Activated CD8-positive, alpha-beta T cell treated with anti-CD3 and anti-CD28 coated beads, Interleukin-2, amount 10 ng/mL, durations not matched to agents 7 days and 5 days (primary cell): ENCODE measurements at regions of chr6 and their contacts with region 1.

Region 1: GRCh38 chr6:119129148-119129967 is 50.9 kb upstream of the FAM184A start:
- DNase-seq: peak; percentile 53
- ATAC-seq: peak; percentile 86
- H3K4me3 Mint-ChIP-seq: no peak overlapping the region
- H3K27ac Mint-ChIP-seq: no peak overlapping the region
- H3K4me1 Mint-ChIP-seq: peaks cover 6% of the 10 kb centered on the region
- H3K27me3 Mint-ChIP-seq: peaks cover 10% of the 10 kb centered on the region

Region 2: DNA sequence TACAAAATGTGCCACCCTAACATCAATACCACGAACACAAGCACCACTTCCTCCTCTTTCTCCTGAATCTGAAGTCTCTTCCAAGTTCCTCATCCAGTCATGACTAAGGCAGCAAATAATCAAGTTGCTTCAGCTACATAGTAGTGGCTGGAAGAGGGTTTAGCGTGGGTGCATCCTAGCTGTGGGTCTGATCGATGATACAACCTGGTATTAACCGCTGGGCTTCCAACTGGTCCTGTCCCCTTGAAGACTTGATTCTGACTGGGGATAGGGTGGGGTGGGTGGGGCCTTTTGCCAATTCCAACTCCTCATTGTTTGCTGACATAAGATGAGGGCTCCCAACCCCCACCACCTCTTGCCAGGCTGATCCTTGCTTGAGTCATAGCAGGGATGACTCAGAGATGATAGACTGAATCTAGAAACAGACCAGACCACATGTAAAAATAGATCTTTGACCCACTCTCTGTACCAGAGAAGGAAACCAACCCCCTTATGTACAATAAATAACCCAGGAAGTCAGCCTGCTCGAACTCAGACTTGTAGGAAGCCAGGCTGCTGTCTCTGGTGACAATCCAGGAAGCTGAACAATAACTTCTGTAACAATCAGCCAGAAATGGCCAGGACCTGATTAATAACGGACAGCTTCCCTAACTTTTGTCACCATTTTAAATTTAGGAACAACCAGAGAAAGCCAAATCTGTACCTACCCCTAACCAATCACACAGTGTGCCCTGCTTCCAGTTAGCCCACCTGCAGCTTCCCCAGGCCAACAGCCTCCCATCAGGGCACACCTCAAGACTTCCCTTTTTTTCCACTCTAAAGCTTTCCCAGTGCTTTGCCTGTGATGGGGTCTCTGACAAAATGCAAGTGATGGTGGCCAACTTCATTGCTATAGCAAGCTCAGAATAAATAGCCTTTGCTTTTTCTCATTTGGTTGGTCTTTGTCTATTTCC is 18.0 kb after region 1 on chr6:
- CTCF ChIA-PET with region 1: interaction called, 53 read pairs
- POLR2A ChIA-PET with region 1: interaction called, 3 read pairs
- DNase-seq: peak; percentile 60
- ATAC-seq: peak; percentile 81
- H3K4me3 Mint-ChIP-seq: no peak overlapping the region
- H3K27ac Mint-ChIP-seq: peak overlapping the region; percentile 75
- H3K4me1 Mint-ChIP-seq: peaks cover 50% of the 10 kb centered on the region
- H3K27me3 Mint-ChIP-seq: peaks cover 6% of the 10 kb centered on the region

Region 3: GRCh38 chr6:119237177-119237715 is 107.9 kb after region 1 on chr6:
- CTCF ChIA-PET with region 1: no interaction called
- POLR2A ChIA-PET with region 1: no interaction called
- DNase-seq: no peak
- ATAC-seq: no peak
- H3K4me3 Mint-ChIP-seq: no peak overlapping the region
- H3K27ac Mint-ChIP-seq: no peak overlapping the region
- H3K4me1 Mint-ChIP-seq: peaks cover 4% of the 10 kb centered on the region
- H3K27me3 Mint-ChIP-seq: no peaks in the 10 kb centered on the region

Region 4: DNA sequence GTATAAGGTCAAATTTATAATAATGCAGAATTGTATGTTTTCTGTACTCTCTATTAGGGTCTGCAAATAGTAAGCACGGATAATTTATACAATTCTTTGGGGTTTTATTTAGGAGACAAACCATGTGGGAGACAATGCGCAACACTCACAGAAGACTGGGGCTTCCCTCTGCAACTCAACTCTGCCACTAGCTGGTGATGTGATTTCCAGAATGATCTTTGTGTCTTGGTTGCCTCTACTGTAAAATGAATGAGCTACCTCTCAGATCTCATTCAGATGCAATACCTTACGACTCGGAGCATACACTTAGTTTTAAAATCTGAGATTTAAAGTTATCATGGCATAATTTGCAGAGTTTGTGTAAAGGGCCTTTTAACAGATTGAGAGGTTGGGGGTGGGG is 213.8 kb after region 1 on chr6:
- CTCF ChIA-PET with region 1: interaction called, 12 read pairs
- POLR2A ChIA-PET with region 1: no interaction called
- DNase-seq: no peak
- ATAC-seq: no peak
- H3K4me3 Mint-ChIP-seq: no peak overlapping the region
- H3K27ac Mint-ChIP-seq: no peak overlapping the region
- H3K4me1 Mint-ChIP-seq: peaks cover 78% of the 10 kb centered on the region
- H3K27me3 Mint-ChIP-seq: no peaks in the 10 kb centered on the region